Dorsolateral prefrontal cortex (tissue), 120 donors: ENCODE measurements at regions of chr9 and their contacts with region 1.

Region 1: DNA sequence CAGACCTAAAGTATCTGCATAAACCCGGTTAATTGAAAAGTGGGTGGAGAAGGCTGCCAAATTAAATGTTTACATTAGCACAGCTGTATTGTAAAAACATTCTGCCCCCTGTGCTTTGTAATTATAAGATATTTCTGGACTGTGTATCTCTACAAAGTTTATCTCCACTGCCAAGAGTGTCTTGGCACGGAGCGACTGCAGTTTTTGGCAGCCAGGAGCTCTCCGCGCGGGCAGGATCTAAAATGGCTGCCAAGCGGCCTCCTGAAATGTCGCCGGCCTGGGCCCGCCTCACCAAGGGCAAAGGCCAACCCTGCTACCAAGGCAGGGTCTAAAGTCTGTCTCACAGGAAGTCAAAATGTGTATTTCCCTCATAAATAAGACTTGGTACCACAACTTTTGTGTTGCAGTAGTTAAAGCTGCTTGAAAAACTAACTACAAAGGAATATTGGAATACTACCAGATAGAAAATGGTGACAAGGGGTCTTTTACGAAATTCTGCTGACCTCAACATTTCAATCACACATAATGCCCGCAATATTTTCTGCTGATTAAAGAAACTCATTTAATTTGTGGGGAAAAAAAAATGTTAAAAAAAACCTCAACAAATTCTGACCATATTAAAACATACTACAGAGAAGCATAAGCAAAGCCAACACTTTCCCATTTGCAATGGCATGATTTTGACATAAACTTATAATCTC is 110.4 kb downstream of the NFIB start:
- DNase-seq: peak; percentile 31 to 82 (median 58)
- H3K4me3 ChIP-seq: peak overlapping the region in 52 of 59 donors; percentile 0 to 59 (median 36)
- H3K27ac ChIP-seq: peak overlapping the region in 52 of 59 donors; percentile 1 to 86 (median 58)
- H3K27me3 ChIP-seq: no peaks in the 10 kb centered on the region
- CTCF ChIP-seq: peak in 6 of 56 donors; percentile 6 to 25 (median 18)

Region 2: GRCh38 chr9:13424204-13424603 is 779.3 kb before region 1 on chr9:
- intact Hi-C with region 1: no loop called
- DNase-seq: no peak
- H3K4me3 ChIP-seq: no peak overlapping the region
- H3K27ac ChIP-seq: no peak overlapping the region
- H3K27me3 ChIP-seq: no peaks in the 10 kb centered on the region
- CTCF ChIP-seq: no peak

Region 3: DNA sequence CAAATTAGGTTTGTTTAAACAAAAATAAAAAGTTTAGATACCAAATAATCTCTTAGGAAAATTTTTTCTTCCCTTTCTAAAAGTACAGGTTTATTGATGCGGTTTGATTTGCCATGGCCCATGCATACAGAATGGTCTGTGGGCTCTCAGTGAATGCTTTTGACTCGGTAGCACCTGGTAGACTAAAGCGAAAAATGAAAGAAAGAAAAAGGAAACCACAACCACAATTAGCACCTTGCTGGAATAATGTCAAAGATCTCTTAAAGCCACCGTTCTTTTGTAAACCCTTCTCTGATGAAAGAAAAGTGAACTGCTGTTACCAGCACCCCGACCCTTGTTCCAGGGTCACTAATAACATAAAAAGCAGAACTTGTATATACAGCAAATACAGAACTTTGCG is 47.5 kb before region 1 on chr9:
- intact Hi-C with region 1: no loop called
- DNase-seq: no peak
- H3K4me3 ChIP-seq: no peak overlapping the region
- H3K27ac ChIP-seq: no peak overlapping the region
- H3K27me3 ChIP-seq: no peaks in the 10 kb centered on the region
- CTCF ChIP-seq: no peak

Region 4: GRCh38 chr9:14302405-14302804 is 98.9 kb after region 1 on chr9:
- intact Hi-C with region 1: loop called (anchors 5 kb)
- DNase-seq: no peak
- H3K4me3 ChIP-seq: peak overlapping the region in 16 of 59 donors; percentile 1 to 92 (median 80)
- H3K27ac ChIP-seq: peak overlapping the region in 52 of 59 donors; percentile 32 to 98 (median 92)
- H3K27me3 ChIP-seq: no peaks in the 10 kb centered on the region
- CTCF ChIP-seq: peak in 1 of 56 donors; percentile 8

Region 5: GRCh38 chr9:14309403-14309802 is 105.9 kb after region 1 on chr9:
- intact Hi-C with region 1: loop called (anchors 5 kb)
- DNase-seq: no peak
- H3K4me3 ChIP-seq: peak overlapping the region in 54 of 59 donors; percentile 6 to 92 (median 76)
- H3K27ac ChIP-seq: peak overlapping the region in 54 of 59 donors; percentile 5 to 98 (median 90)
- H3K27me3 ChIP-seq: peaks cover 0 to 9% (median 0%) of the 10 kb centered on the region in 45 donors
- CTCF ChIP-seq: no peak